Uterus (tissue), 4 donors: ENCODE measurements at regions of chr3 and their contacts with region 1.

Region 1: GRCh38 chr3:197186887-197187588 is 111.4 kb downstream of the DLG1 start:
- DNase-seq: peak in 1 of 2 donors; percentile 28
- H3K4me3 ChIP-seq: no peak overlapping the region
- H3K27ac ChIP-seq: no peak overlapping the region
- H3K4me1 ChIP-seq: no peaks in the 10 kb centered on the region
- H3K27me3 ChIP-seq: no peaks in the 10 kb centered on the region
- CTCF ChIP-seq: peak; percentile 74 to 79 (median 75)
- POLR2A ChIP-seq: no peak

Region 2: DNA sequence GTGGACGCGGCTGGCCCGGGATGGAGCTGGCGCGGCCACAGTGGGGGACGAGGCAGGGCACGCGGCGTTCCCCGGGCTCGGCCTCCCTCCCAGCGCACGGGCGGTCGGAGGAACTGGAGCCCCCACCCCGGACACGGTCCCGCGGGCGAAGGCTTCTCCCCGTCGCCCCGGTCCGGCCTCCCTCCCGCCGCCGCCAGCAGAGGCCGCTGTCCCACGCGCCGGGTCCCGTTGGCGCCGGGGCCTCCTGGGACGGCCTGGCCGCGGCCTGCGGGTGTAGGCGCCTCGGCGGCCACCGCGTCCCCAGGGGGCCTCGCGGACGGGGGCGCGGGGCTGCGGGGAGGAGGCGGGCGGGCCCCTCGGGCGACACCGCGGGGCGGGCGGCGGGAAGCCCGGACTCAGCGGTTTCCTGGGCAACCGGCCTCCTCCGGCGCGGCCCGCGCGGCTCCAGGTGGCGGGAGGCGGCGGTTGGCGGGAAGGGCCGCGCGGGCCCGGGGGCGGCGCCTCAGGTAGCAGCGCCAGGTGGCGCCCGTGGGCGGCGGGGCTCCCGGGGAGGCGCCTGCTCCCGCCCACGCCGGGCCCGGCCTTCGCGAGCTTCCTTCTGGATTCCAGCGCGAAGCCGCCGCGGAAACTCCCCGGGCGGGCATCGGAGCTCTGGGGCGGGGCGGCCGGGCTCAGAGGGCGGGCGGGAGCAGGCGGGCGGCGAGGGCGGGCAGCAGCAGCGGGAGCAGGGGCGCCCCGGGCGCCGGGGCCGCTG is 184.2 kb before region 1 on chr3:
- intact Hi-C with region 1: loop called (anchors 10 kb)
- DNase-seq: peak; percentile 66 to 80
- H3K4me3 ChIP-seq: peak overlapping the region; percentile 33 to 52
- H3K27ac ChIP-seq: peak overlapping the region; percentile 85 to 94
- H3K4me1 ChIP-seq: no peaks in the 10 kb centered on the region
- H3K27me3 ChIP-seq: no peaks in the 10 kb centered on the region
- CTCF ChIP-seq: peak; percentile 43 to 94 (median 85)
- POLR2A ChIP-seq: peak in 1 of 2 donors; percentile 35

Region 3: DNA sequence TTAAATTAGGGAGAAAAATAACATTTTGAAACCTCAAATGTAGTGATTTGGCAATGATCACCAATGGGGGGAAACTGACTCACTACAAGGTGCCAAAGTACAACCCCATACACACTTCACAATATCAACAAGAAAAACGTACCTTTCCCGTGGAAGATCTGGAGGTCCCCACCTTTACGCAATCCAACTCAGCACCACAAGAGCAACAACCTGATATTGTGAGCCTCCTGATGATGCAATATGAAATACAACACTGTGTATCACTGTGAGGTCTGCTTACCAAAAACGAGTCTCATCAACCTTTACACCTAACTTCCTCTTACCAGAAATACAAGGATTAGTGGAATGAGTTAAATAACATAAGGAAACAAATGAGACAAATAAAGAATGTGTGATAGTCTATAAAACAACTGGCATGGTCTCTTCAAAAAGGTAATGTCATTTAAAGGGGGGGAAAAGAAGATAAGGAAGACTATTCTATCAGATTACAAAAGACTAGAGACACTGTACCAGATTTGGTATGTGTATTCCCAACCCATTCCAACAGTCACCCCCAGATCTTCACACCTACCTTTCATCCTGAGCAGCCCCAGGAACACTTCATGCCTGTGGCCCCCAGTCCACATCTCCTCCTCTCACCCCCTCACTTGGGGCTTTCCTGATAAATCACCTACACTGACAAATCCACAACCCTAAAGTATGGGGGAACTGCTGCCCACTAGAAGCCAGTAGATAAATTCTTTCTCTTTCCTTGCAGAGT is 83.7 kb after region 1 on chr3:
- intact Hi-C with region 1: no loop called
- DNase-seq: no peak
- H3K4me3 ChIP-seq: no peak overlapping the region
- H3K27ac ChIP-seq: no peak overlapping the region
- H3K4me1 ChIP-seq: peaks cover 0 to 5% of the 10 kb centered on the region in 2 donors
- H3K27me3 ChIP-seq: no peaks in the 10 kb centered on the region
- CTCF ChIP-seq: no peak
- POLR2A ChIP-seq: no peak

Region 4: DNA sequence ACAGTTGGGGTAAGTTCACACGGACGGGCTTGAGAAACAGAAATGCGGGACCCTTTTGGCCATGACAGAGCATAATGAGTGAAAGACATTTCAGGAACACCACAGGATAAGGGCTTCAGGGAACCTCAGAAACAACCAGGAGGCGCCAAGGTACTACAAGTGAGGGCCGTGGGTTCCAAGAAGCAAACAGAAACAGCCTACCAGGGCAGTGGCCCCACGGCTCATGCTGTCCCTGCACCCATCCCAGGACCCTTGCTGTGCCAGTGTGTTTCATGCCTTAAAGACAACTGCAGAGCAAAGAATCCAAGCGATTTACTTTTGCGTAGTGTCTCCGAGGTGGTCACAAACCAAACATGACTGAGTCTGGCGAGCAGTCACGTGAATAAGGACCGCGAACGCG is 495.7 kb after region 1 on chr3:
- intact Hi-C with region 1: loop called (anchors 10 kb)
- DNase-seq: no peak
- H3K4me3 ChIP-seq: no peak overlapping the region
- H3K27ac ChIP-seq: no peak overlapping the region
- H3K4me1 ChIP-seq: no peaks in the 10 kb centered on the region
- H3K27me3 ChIP-seq: no peaks in the 10 kb centered on the region
- CTCF ChIP-seq: no peak
- POLR2A ChIP-seq: no peak